CD8-positive, alpha-beta T cell (primary cell): ENCODE measurements at regions of chr10 and their contacts with region 1.

Region 1: GRCh38 chr10:71708301-71708703 is 11.3 kb downstream of the C10orf105 start:
- DNase-seq: peak; percentile 38 to 83 (median 68)
- ATAC-seq: peak; percentile 66
- H3K4me3 ChIP-seq: no peak overlapping the region
- H3K4me3 Mint-ChIP-seq: no peak overlapping the region
- H3K27ac ChIP-seq: no peak overlapping the region
- H3K27ac Mint-ChIP-seq: no peak overlapping the region
- H3K4me1 ChIP-seq: peaks cover 31% of the 10 kb centered on the region
- H3K4me1 Mint-ChIP-seq: peaks cover 47% of the 10 kb centered on the region
- H3K27me3 ChIP-seq: no peaks in the 10 kb centered on the region
- H3K27me3 Mint-ChIP-seq: no peaks in the 10 kb centered on the region
- CTCF ChIP-seq: peak; percentile 79

Region 2: DNA sequence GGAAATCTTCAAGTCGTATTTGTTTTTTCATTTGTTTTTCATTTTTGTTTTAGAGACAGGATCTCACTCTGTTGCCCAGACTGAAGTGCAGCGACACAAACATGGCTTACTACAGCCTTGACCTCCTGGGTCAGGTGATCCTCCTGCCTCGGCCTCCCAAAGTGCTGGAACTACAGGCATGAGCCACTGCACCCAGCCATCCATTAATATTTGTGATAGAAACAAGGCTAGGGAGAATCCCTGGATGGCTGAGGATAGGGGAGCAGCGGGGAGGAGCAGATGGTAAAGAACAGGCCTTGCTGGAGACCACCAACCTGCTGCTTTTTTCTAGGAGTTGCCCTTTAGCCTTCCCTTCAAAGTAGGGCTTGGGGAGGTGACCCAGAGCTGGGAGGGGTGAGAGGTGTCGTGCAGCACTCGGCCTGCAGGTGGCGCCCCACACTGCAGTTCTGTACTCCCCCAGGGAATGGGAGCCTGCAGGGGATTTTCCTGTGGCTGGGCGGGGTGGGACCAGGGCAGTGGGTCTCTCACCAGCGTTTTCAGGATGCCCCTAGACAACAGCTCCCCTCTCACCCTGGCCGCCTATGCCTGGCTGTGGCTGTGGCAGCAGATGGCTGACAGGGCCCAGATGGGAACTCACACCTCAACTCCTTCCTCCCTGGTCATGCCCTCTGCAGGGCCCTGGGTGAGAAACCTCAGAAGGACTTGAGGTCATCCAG is 324.2 kb before region 1 on chr10:
- CTCF ChIA-PET with region 1: interaction called, 16 read pairs
- POLR2A ChIA-PET with region 1: no interaction called
- intact Hi-C with region 1: loop called (anchors 1 kb)
- DNase-seq: peak; percentile 56 to 83 (median 76)
- ATAC-seq: peak; percentile 89
- H3K4me3 ChIP-seq: no peak overlapping the region
- H3K4me3 Mint-ChIP-seq: no peak overlapping the region
- H3K27ac ChIP-seq: no peak overlapping the region
- H3K27ac Mint-ChIP-seq: no peak overlapping the region
- H3K4me1 ChIP-seq: no peaks in the 10 kb centered on the region
- H3K4me1 Mint-ChIP-seq: no peaks in the 10 kb centered on the region
- H3K27me3 ChIP-seq: peaks cover 0 to 3% of the 10 kb centered on the region in 2 experiments
- H3K27me3 Mint-ChIP-seq: no peaks in the 10 kb centered on the region
- CTCF ChIP-seq: peak; percentile 83

Region 3: GRCh38 chr10:71696628-71697326 is 11.5 kb before region 1 on chr10:
- CTCF ChIA-PET with region 1: interaction called, 238 read pairs
- POLR2A ChIA-PET with region 1: interaction called, 4 read pairs
- intact Hi-C with region 1: loop called in 1 of 2 experiments (anchors 1 kb)
- DNase-seq: peak; percentile 43 to 81 (median 70)
- ATAC-seq: peak; percentile 61
- H3K4me3 ChIP-seq: no peak overlapping the region
- H3K4me3 Mint-ChIP-seq: no peak overlapping the region
- H3K27ac ChIP-seq: no peak overlapping the region
- H3K27ac Mint-ChIP-seq: no peak overlapping the region
- H3K4me1 ChIP-seq: peaks cover 49% of the 10 kb centered on the region
- H3K4me1 Mint-ChIP-seq: peaks cover 49% of the 10 kb centered on the region
- H3K27me3 ChIP-seq: no peaks in the 10 kb centered on the region
- H3K27me3 Mint-ChIP-seq: no peaks in the 10 kb centered on the region
- CTCF ChIP-seq: peak; percentile 71

Region 4: DNA sequence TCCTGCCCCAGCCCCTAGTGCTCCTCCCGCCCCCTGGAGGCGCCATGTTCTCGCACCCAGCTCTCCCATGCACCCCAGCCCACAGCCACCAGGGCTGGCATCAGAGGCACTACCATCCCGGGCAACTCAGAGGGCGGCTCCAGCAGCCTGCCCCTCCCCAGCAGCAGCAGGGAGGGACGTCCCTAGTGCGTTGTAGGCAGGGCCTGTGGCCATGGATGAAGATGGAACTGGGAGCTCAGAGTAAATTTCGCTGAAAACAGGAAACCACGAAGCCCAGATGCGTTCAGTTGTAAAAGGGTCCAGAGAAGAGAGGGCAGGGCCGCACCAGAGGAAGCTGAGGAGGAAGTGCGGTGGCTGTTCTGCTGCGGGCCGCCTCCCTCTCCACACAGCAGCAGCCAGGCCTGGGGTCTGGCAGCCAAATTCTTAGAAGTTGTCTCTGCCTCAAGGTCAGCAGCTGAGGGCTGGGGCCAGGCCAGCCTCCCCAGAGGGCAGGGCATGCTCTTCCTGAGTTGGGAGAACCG is 40.4 kb after region 1 on chr10:
- CTCF ChIA-PET with region 1: interaction called, 26 read pairs
- POLR2A ChIA-PET with region 1: interaction called, 11 read pairs
- intact Hi-C with region 1: loop called in 1 of 2 experiments (anchors 5 kb)
- DNase-seq: peak; percentile 57 to 93 (median 78)
- ATAC-seq: peak; percentile 88
- H3K4me3 ChIP-seq: peak overlapping the region in 1 of 2 experiments; percentile 27
- H3K4me3 Mint-ChIP-seq: peak overlapping the region; percentile 74
- H3K27ac ChIP-seq: peak overlapping the region; percentile 57 to 82
- H3K27ac Mint-ChIP-seq: peak overlapping the region; percentile 93
- H3K4me1 ChIP-seq: peaks cover 100% of the 10 kb centered on the region
- H3K4me1 Mint-ChIP-seq: peaks cover 96% of the 10 kb centered on the region
- H3K27me3 ChIP-seq: no peaks in the 10 kb centered on the region
- H3K27me3 Mint-ChIP-seq: no peaks in the 10 kb centered on the region
- CTCF ChIP-seq: no peak

Region 5: GRCh38 chr10:71771821-71772617 is 63.7 kb after region 1 on chr10:
- CTCF ChIA-PET with region 1: interaction called, 242 read pairs
- POLR2A ChIA-PET with region 1: interaction called, 25 read pairs
- intact Hi-C with region 1: loop called (anchors 1 to 5 kb)
- DNase-seq: peak in 2 of 9 experiments; percentile 30 to 50
- ATAC-seq: no peak
- H3K4me3 ChIP-seq: peak overlapping the region; percentile 88 to 100
- H3K4me3 Mint-ChIP-seq: peak overlapping the region; percentile 95
- H3K27ac ChIP-seq: peak overlapping the region; percentile 80 to 89
- H3K27ac Mint-ChIP-seq: peak overlapping the region; percentile 92
- H3K4me1 ChIP-seq: peaks cover 73% of the 10 kb centered on the region
- H3K4me1 Mint-ChIP-seq: peaks cover 81% of the 10 kb centered on the region
- H3K27me3 ChIP-seq: no peaks in the 10 kb centered on the region
- H3K27me3 Mint-ChIP-seq: no peaks in the 10 kb centered on the region
- CTCF ChIP-seq: no peak

Region 6: GRCh38 chr10:72753760-72754231 is 1045.5 kb after region 1 on chr10:
- CTCF ChIA-PET with region 1: no interaction called
- POLR2A ChIA-PET with region 1: no interaction called
- intact Hi-C with region 1: no loop called
- DNase-seq: peak in 1 of 9 experiments; percentile 3
- ATAC-seq: no peak
- H3K4me3 ChIP-seq: no peak overlapping the region
- H3K4me3 Mint-ChIP-seq: no peak overlapping the region
- H3K27ac ChIP-seq: no peak overlapping the region
- H3K27ac Mint-ChIP-seq: no peak overlapping the region
- H3K4me1 ChIP-seq: peaks cover 4% of the 10 kb centered on the region
- H3K4me1 Mint-ChIP-seq: peaks cover 11% of the 10 kb centered on the region
- H3K27me3 ChIP-seq: no peaks in the 10 kb centered on the region
- H3K27me3 Mint-ChIP-seq: no peaks in the 10 kb centered on the region
- CTCF ChIP-seq: no peak